ENCODE measurements at regions of chr2 and their contacts with region 1.

Region 1: GRCh38 chr2:171939743-171940071 is 17.4 kb downstream of the HAT1 start:
- DNase-seq: no peak
- H3K4me3 ChIP-seq: no peak overlapping the region
- H3K27ac ChIP-seq: no peak overlapping the region
- H3K4me1 ChIP-seq: no peaks in the 10 kb centered on the region
- H3K27me3 ChIP-seq: no peaks in the 10 kb centered on the region
- CTCF ChIP-seq: no peak

Region 2: GRCh38 chr2:170843656-170844055 is 1096.1 kb before region 1 on chr2:
- CTCF ChIA-PET with region 1: no interaction called
- POLR2A ChIA-PET with region 1: no interaction called
- intact Hi-C with region 1: no loop called
- DNase-seq: peak; percentile 17 to 64
- H3K4me3 ChIP-seq: no peak overlapping the region
- H3K27ac ChIP-seq: no peak overlapping the region
- H3K4me1 ChIP-seq: no peaks in the 10 kb centered on the region; the same call in 1 of the 2 replicates
- H3K27me3 ChIP-seq: no peaks in the 10 kb centered on the region
- CTCF ChIP-seq: no peak

Region 3: GRCh38 chr2:171754254-171754939 is 185.3 kb before region 1 on chr2:
- CTCF ChIA-PET with region 1: interaction called, 13 read pairs
- POLR2A ChIA-PET with region 1: no interaction called
- intact Hi-C with region 1: no loop called
- DNase-seq: no peak
- H3K4me3 ChIP-seq: no peak overlapping the region
- H3K27ac ChIP-seq: no peak overlapping the region
- H3K4me1 ChIP-seq: no peaks in the 10 kb centered on the region
- H3K27me3 ChIP-seq: no peaks in the 10 kb centered on the region
- CTCF ChIP-seq: no peak

Region 4: GRCh38 chr2:172052000-172052983 is 112.6 kb after region 1 on chr2:
- CTCF ChIA-PET with region 1: no interaction called
- POLR2A ChIA-PET with region 1: no interaction called
- intact Hi-C with region 1: no loop called
- DNase-seq: no peak
- H3K4me3 ChIP-seq: no peak overlapping the region
- H3K27ac ChIP-seq: no peak overlapping the region
- H3K4me1 ChIP-seq: no peaks in the 10 kb centered on the region
- H3K27me3 ChIP-seq: no peaks in the 10 kb centered on the region
- CTCF ChIP-seq: no peak

Region 5: DNA sequence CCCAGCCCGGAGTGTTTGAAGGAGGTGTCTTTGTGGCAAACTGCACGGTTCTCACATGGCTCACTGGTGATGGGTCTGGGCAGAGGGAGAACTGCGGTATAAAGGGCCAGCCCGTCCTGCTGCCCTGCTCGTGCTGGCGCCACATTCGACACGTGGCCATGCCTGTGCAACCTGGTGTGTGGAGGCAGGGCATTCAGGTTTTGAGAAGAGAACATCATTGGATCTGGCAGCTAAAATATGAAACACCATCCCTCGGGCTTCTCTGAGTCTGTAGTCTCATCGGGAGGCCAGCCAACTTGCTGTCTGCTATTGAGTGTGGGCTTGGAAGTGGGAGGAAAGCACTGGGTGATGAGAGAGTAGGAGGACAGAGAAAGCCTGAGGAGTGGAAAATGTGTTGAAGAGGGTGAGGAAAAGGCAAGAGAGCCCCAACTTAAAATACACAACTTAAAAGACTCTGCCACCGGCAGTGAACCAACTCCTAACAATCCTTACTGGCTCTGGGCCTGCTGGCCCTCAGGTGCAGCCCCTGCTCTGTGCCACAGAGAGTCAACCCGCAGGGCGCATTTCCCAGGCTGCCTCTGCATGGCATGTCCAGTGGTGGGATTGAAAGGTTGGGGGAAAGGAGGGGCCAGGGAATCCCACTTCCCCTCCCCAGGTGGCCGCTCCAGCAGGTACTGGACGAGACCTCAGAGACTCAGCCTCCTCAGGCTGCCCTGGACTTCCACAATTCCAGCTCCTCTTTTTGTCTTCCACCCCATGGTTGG is 275.6 kb after region 1 on chr2:
- CTCF ChIA-PET with region 1: no interaction called
- POLR2A ChIA-PET with region 1: no interaction called
- intact Hi-C with region 1: no loop called
- DNase-seq: no peak
- H3K4me3 ChIP-seq: no peak overlapping the region
- H3K27ac ChIP-seq: no peak overlapping the region
- H3K4me1 ChIP-seq: peaks cover 9% of the 10 kb centered on the region
- H3K27me3 ChIP-seq: no peaks in the 10 kb centered on the region
- CTCF ChIP-seq: no peak